ENCODE measurements at regions of chr3 and their contacts with region 1.

Region 1: DNA sequence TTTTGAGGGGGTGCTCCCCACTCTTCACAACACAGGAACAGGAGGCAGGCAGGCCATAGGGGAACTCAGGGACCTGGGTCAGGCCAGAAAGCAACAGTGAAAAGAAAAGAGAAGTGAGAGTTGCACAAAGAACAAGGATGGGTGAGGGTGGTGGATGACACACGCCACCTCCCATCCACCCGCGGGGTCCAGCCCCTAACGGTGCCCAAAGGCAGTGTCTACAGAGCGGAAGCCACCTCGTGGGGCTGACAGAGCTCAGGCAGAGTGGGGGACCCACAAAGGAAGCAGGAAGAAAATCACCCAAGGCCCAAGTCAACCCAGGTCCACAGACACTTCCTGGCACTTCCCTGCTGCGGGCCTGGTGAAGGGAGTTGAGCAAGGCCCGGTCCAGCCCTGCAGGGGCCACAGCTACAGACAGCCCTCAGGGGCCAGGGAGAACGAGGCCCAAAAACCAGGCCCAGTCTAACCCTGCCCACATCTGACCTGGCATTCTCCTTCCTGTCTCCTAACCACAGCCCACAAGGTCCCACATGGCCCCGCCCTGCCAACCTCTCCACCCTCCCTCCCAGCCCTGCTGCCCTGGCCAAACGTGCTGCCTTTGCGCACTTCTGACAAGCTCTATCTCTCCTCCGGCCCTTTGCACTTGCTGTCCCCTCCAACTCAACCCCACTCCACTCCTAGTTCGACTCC is 5.9 kb downstream of the NUP210 start:
- DNase-seq: peak; percentile 85
- H3K4me3 Mint-ChIP-seq: peak overlapping the region; percentile 67
- H3K27ac Mint-ChIP-seq: peak overlapping the region; percentile 90
- H3K4me1 Mint-ChIP-seq: peaks cover 54% of the 10 kb centered on the region
- H3K27me3 Mint-ChIP-seq: no peaks in the 10 kb centered on the region

Region 2: DNA sequence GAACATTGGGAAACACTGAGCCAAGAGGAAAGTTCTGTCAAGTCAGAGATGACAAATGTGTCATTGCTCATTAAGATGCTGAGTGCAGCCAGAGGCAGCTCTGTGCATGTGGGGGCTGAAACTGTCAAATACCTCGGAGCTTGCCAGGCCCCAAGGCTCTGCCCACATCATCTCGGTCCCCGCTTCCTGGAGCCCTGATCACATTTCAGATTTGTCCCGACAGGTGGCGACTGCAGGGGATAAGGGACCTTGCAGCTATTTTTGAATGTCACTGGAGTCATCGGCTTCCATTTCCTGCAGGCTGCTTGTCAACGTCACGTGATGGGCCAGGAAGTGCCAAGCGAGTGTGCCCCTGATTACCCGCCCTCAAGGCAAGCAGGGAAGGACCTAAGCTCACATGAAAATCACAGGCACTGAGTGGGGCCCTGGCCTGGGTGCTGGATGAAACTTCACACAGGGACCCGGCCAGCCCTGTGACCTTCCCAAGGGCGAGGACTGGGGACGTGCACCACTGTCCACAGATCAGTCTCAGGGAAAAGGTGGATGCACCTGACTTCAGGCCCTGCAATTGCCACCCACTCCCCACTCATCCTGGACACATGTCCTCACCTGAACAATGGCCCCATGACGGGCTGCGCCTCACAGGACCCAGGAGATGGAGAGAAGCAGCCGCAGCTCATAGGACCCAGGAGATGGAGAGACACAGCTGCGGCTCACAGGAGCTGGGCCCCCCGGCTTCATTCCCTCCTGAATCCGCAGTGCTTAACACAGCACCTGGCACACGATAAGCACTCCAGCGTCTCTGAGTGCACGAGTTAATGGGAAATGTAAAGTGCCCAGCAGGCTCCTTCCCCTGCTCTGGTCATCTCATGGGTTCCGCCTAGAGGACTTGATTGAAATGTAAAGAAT is 67.5 kb before region 1 on chr3:
- CTCF ChIA-PET with region 1: interaction called, 8 read pairs
- POLR2A ChIA-PET with region 1: interaction called, 3 read pairs
- intact Hi-C with region 1: loop called (anchors 1 kb)
- DNase-seq: peak; percentile 91
- H3K4me3 Mint-ChIP-seq: no peak overlapping the region
- H3K27ac Mint-ChIP-seq: peak overlapping the region; percentile 82
- H3K4me1 Mint-ChIP-seq: peaks cover 56% of the 10 kb centered on the region
- H3K27me3 Mint-ChIP-seq: no peaks in the 10 kb centered on the region

Region 3: GRCh38 chr3:13427662-13428603 is 13.7 kb after region 1 on chr3:
- CTCF ChIA-PET with region 1: interaction called, 11 read pairs
- POLR2A ChIA-PET with region 1: interaction called, 7 read pairs
- intact Hi-C with region 1: loop called (anchors 1 kb)
- DNase-seq: peak; percentile 44
- H3K4me3 Mint-ChIP-seq: peak overlapping the region; percentile 14
- H3K27ac Mint-ChIP-seq: peak overlapping the region; percentile 94
- H3K4me1 Mint-ChIP-seq: peaks cover 38% of the 10 kb centered on the region
- H3K27me3 Mint-ChIP-seq: no peaks in the 10 kb centered on the region

Region 4: GRCh38 chr3:13461169-13462158 is 47.3 kb after region 1 on chr3:
- CTCF ChIA-PET with region 1: interaction called, 105 read pairs
- POLR2A ChIA-PET with region 1: no interaction called
- intact Hi-C with region 1: no loop called
- DNase-seq: peak; percentile 86
- H3K4me3 Mint-ChIP-seq: no peak overlapping the region
- H3K27ac Mint-ChIP-seq: no peak overlapping the region
- H3K4me1 Mint-ChIP-seq: peaks cover 2% of the 10 kb centered on the region
- H3K27me3 Mint-ChIP-seq: peaks cover 4% of the 10 kb centered on the region

Region 5: GRCh38 chr3:13708301-13708700 is 294.1 kb after region 1 on chr3:
- CTCF ChIA-PET with region 1: no interaction called
- POLR2A ChIA-PET with region 1: no interaction called
- intact Hi-C with region 1: no loop called
- DNase-seq: no peak
- H3K4me3 Mint-ChIP-seq: no peak overlapping the region
- H3K27ac Mint-ChIP-seq: no peak overlapping the region
- H3K4me1 Mint-ChIP-seq: no peaks in the 10 kb centered on the region
- H3K27me3 Mint-ChIP-seq: peaks cover 25% of the 10 kb centered on the region

Measured in activated CD4-positive, alpha-beta memory T cell treated with anti-CD3 and anti-CD28 coated beads for 36 hours (primary cell).